ENCODE measurements at regions of chr15 and their contacts with region 1.

Region 1: GRCh38 chr15:35289024-35289617 is 204.0 kb upstream of the NANOGP8 start:
- DNase-seq: peak; percentile 71
- H3K4me3 ChIP-seq: no peak overlapping the region
- H3K27ac ChIP-seq: no peak overlapping the region
- H3K4me1 ChIP-seq: peaks cover 12% of the 10 kb centered on the region
- H3K27me3 ChIP-seq: peaks cover 18 to 51% of the 10 kb centered on the region in 2 experiments
- CTCF ChIP-seq: peak; percentile 59 to 63
- POLR2A ChIP-seq: no peak

Region 2: GRCh38 chr15:35078221-35078915 is 210.8 kb before region 1 on chr15:
- CTCF ChIA-PET with region 1: interaction called, 30 read pairs
- POLR2A ChIA-PET with region 1: no interaction called
- dilution Hi-C with region 1: no loop called
- intact Hi-C with region 1: loop called (anchors 1 kb)
- DNase-seq: peak; percentile 54
- H3K4me3 ChIP-seq: no peak overlapping the region
- H3K27ac ChIP-seq: no peak overlapping the region
- H3K4me1 ChIP-seq: no peaks in the 10 kb centered on the region
- H3K27me3 ChIP-seq: peaks cover 3 to 4% of the 10 kb centered on the region in 2 experiments
- CTCF ChIP-seq: peak; percentile 72 to 73
- POLR2A ChIP-seq: no peak

Region 3: DNA sequence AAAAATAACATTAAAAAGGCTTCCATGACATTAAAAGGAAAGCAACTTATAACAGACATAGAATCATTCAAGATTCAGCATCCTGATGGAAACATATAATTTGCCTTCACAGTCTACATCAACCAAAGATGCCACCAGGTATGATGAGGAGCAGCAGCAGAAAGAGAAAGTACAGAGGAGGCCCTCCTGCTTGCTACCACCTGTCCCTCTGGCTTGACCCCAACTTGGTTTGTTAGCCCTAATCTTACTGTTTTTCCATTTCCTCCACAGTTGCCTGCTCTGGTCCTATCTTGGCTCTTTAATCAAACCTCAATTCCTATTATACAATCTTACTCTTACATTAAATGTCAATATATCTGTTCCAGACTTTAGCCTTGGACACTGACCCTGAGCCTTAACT is 85.5 kb after region 1 on chr15:
- CTCF ChIA-PET with region 1: interaction called, 3 read pairs
- POLR2A ChIA-PET with region 1: no interaction called
- dilution Hi-C with region 1: no loop called
- intact Hi-C with region 1: loop called (anchors 5 kb)
- DNase-seq: no peak
- H3K4me3 ChIP-seq: no peak overlapping the region
- H3K27ac ChIP-seq: no peak overlapping the region
- H3K4me1 ChIP-seq: no peaks in the 10 kb centered on the region
- H3K27me3 ChIP-seq: no peaks in the 10 kb centered on the region
- CTCF ChIP-seq: no peak
- POLR2A ChIP-seq: no peak

Region 4: GRCh38 chr15:35444557-35445204 is 155.6 kb after region 1 on chr15:
- CTCF ChIA-PET with region 1: interaction called, 828 read pairs
- POLR2A ChIA-PET with region 1: no interaction called
- dilution Hi-C with region 1: no loop called
- intact Hi-C with region 1: loop called (anchors 1 kb)
- DNase-seq: peak; percentile 72
- H3K4me3 ChIP-seq: no peak overlapping the region
- H3K27ac ChIP-seq: no peak overlapping the region
- H3K4me1 ChIP-seq: peaks cover 4% of the 10 kb centered on the region
- H3K27me3 ChIP-seq: peaks cover 0 to 2% of the 10 kb centered on the region in 2 experiments
- CTCF ChIP-seq: peak; percentile 59 to 68
- POLR2A ChIP-seq: no peak

Region 5: GRCh38 chr15:35697549-35698299 is 408.6 kb after region 1 on chr15:
- CTCF ChIA-PET with region 1: interaction called, 10 read pairs
- POLR2A ChIA-PET with region 1: no interaction called
- dilution Hi-C with region 1: no loop called
- intact Hi-C with region 1: loop called (anchors 2 kb)
- DNase-seq: peak; percentile 97
- H3K4me3 ChIP-seq: peak overlapping the region in 1 of 3 experiments; percentile 18
- H3K27ac ChIP-seq: peak overlapping the region; percentile 92
- H3K4me1 ChIP-seq: peaks cover 37% of the 10 kb centered on the region
- H3K27me3 ChIP-seq: no peaks in the 10 kb centered on the region
- CTCF ChIP-seq: peak; percentile 13 to 19
- POLR2A ChIP-seq: peak; percentile 25

Region 6: GRCh38 chr15:36579792-36580431 is 1290.8 kb after region 1 on chr15:
- CTCF ChIA-PET with region 1: no interaction called
- POLR2A ChIA-PET with region 1: no interaction called
- dilution Hi-C with region 1: no loop called
- intact Hi-C with region 1: loop called (anchors 5 kb)
- DNase-seq: no peak
- H3K4me3 ChIP-seq: peak overlapping the region; percentile 24 to 87 (median 72)
- H3K27ac ChIP-seq: peak overlapping the region; percentile 92
- H3K4me1 ChIP-seq: peaks cover 10% of the 10 kb centered on the region
- H3K27me3 ChIP-seq: no peaks in the 10 kb centered on the region
- CTCF ChIP-seq: no peak
- POLR2A ChIP-seq: no peak

Region 7: GRCh38 chr15:37134699-37135131 is 1845.6 kb after region 1 on chr15:
- CTCF ChIA-PET with region 1: interaction called, 10 read pairs
- POLR2A ChIA-PET with region 1: no interaction called
- dilution Hi-C with region 1: no loop called
- intact Hi-C with region 1: loop called (anchors 10 kb)
- DNase-seq: peak; percentile 53
- H3K4me3 ChIP-seq: no peak overlapping the region
- H3K27ac ChIP-seq: no peak overlapping the region
- H3K4me1 ChIP-seq: no peaks in the 10 kb centered on the region
- H3K27me3 ChIP-seq: peaks cover 18 to 33% of the 10 kb centered on the region in 2 experiments
- CTCF ChIP-seq: peak; percentile 42 to 54
- POLR2A ChIP-seq: no peak